K562 (cell line): ENCODE measurements at regions of chr20 and their contacts with region 1.

Region 1: GRCh38 chr20:58980700-58981627 is at the start of gene NELFCD:
- DNase-seq: peak; percentile 91 to 99 (median 99)
- ATAC-seq: peak; percentile 84
- H3K4me3 ChIP-seq: peak within 1 kb of the TSS; percentile 78
- H3K27ac ChIP-seq: peak within 1 kb of the TSS; percentile 84
- H3K4me1 ChIP-seq: peaks cover 17 to 25% of the 10 kb centered on the region in 2 experiments; a peak in 4 of 5 replicates
- H3K27me3 ChIP-seq: no peaks in the 10 kb centered on the region
- CTCF ChIP-seq: no peak
- EP300 ChIP-seq: no peak
- POLR2A ChIP-seq: peak; percentile 77
- RAD21 ChIP-seq: no peak
- polyA plus RNA-seq, gene NELFCD: 11.7 to 22.2 TPM

Region 2: DNA sequence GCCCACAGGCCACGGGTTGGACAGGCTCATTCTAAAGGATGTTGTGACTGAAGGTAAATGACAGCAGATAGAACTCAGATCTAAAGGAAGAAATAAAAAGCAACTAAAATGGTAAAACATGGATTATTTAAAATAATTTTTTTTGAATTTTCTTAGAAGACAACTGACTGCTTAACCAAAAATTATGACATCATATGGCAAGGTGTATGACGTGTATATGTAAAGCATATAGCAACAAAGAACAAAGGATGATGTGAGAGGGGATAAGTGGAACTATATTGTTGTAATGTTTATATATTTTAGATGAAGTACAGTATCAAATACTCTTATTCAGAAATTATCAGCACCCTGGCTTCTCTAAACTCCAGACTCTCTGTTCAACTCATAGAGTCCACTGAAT is 249.8 kb before region 1 on chr20:
- CTCF ChIA-PET with region 1: no interaction called
- POLR2A ChIA-PET with region 1: no interaction called
- in situ Hi-C with region 1: no loop called
- intact Hi-C with region 1: no loop called
- DNase-seq: no peak
- ATAC-seq: no peak
- H3K4me3 ChIP-seq: no peak overlapping the region
- H3K27ac ChIP-seq: no peak overlapping the region
- H3K4me1 ChIP-seq: no peaks in the 10 kb centered on the region
- H3K27me3 ChIP-seq: peaks cover 0 to 3% of the 10 kb centered on the region in 2 experiments; a peak in 2 of 5 replicates
- CTCF ChIP-seq: no peak
- EP300 ChIP-seq: no peak
- POLR2A ChIP-seq: no peak
- RAD21 ChIP-seq: no peak

Region 3: DNA sequence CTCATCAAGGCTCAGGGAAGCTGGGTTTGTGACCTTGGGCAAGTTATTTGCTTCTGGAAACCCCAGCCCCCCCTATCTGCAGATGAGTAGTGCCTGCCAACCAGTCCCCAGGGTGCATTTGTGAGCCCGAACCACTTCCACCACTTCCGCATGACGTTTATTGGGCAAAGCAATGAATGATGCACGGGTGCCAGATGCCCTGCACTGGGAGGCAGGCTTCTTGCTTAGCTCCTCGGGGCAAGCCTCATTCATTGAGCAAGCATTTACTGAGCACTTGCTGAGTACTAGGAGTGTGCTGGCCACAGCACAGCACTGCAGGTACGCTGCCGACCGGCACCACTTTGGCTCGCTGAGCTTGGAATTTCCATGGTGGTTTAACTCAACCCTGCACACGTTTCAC is 190.5 kb before region 1 on chr20:
- CTCF ChIA-PET with region 1: no interaction called
- POLR2A ChIA-PET with region 1: no interaction called
- in situ Hi-C with region 1: no loop called
- intact Hi-C with region 1: no loop called
- DNase-seq: no peak
- ATAC-seq: no peak
- H3K4me3 ChIP-seq: no peak overlapping the region
- H3K27ac ChIP-seq: no peak overlapping the region
- H3K4me1 ChIP-seq: no peaks in the 10 kb centered on the region; a peak in 1 of 5 replicates
- H3K27me3 ChIP-seq: peaks cover 26 to 89% of the 10 kb centered on the region in 2 experiments
- CTCF ChIP-seq: no peak
- EP300 ChIP-seq: no peak
- POLR2A ChIP-seq: no peak
- RAD21 ChIP-seq: no peak

Region 4: DNA sequence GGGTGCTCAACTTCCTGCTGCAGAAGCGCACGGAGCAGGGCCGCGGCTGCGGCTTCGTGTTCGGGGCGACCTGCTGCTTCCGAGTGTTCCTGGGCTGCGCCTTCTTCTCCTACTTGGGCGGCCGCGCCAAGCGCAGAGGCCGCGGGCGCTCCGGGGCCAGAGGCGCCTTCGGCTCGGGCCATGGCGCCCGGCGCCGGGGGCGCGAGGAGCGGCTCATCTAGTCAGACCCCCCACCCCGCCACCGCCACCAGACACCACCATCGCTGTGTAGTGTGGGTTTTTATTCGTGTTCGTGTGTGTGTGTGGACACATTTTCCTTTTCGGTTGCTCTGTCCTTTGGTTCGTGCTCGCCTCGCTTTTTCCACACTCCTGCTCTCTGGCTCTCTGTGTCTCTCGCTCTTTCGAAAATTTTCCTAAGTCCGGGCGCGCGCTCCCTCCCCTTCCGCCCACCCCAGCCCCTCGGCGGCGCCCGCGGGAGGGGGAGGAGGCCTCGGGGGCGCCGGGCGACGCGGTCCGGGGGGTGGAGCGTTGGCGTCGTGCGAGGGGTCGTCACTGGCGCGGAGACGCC is 90.4 kb before region 1 on chr20:
- CTCF ChIA-PET with region 1: no interaction called
- POLR2A ChIA-PET with region 1: no interaction called
- in situ Hi-C with region 1: no loop called
- intact Hi-C with region 1: loop called (anchors 5 kb)
- DNase-seq: peak in 1 of 4 experiments; percentile 67
- ATAC-seq: peak; percentile 42
- H3K4me3 ChIP-seq: peak overlapping the region; percentile 92
- H3K27ac ChIP-seq: peak overlapping the region; percentile 71
- H3K4me1 ChIP-seq: peaks cover 13 to 20% of the 10 kb centered on the region in 2 experiments; a peak in 4 of 5 replicates
- H3K27me3 ChIP-seq: no peaks in the 10 kb centered on the region
- CTCF ChIP-seq: no peak
- EP300 ChIP-seq: no peak
- POLR2A ChIP-seq: 0 out of 2 replicates have a peak, but pooled peaks have one; percentile 45
- RAD21 ChIP-seq: no peak

Region 5: GRCh38 chr20:58993332-58994201 is 12.6 kb after region 1 on chr20:
- CTCF ChIA-PET with region 1: no interaction called
- POLR2A ChIA-PET with region 1: interaction called, 29 read pairs
- in situ Hi-C with region 1: no loop called
- intact Hi-C with region 1: no loop called
- DNase-seq: no peak
- ATAC-seq: no peak; the same call in 2 of the 3 replicates
- H3K4me3 ChIP-seq: no peak overlapping the region
- H3K27ac ChIP-seq: no peak overlapping the region
- H3K4me1 ChIP-seq: peaks cover 0 to 7% of the 10 kb centered on the region in 2 experiments; a peak in 1 of 5 replicates
- H3K27me3 ChIP-seq: no peaks in the 10 kb centered on the region
- CTCF ChIP-seq: no peak
- EP300 ChIP-seq: no peak
- POLR2A ChIP-seq: 0 out of 2 replicates have a peak, but pooled peaks have one; percentile 15
- RAD21 ChIP-seq: no peak

Region 6: GRCh38 chr20:59222253-59223181 is 241.6 kb after region 1 on chr20:
- CTCF ChIA-PET with region 1: no interaction called
- POLR2A ChIA-PET with region 1: no interaction called
- in situ Hi-C with region 1: loop called (anchors 10 kb)
- intact Hi-C with region 1: no loop called
- DNase-seq: peak; percentile 76 to 86 (median 84)
- ATAC-seq: peak; percentile 100
- H3K4me3 ChIP-seq: peak overlapping the region; percentile 10; the same call in 1 of the 2 replicates
- H3K27ac ChIP-seq: no peak overlapping the region
- H3K4me1 ChIP-seq: peaks cover 0 to 9% of the 10 kb centered on the region in 2 experiments; a peak in 2 of 5 replicates
- H3K27me3 ChIP-seq: peaks cover 29 to 40% of the 10 kb centered on the region in 2 experiments
- CTCF ChIP-seq: peak; percentile 88 to 92 (median 91)
- EP300 ChIP-seq: no peak
- POLR2A ChIP-seq: no peak
- RAD21 ChIP-seq: peak; percentile 76 to 83